ENCODE measurements at regions of chr15 and their contacts with region 1.

Region 1: DNA sequence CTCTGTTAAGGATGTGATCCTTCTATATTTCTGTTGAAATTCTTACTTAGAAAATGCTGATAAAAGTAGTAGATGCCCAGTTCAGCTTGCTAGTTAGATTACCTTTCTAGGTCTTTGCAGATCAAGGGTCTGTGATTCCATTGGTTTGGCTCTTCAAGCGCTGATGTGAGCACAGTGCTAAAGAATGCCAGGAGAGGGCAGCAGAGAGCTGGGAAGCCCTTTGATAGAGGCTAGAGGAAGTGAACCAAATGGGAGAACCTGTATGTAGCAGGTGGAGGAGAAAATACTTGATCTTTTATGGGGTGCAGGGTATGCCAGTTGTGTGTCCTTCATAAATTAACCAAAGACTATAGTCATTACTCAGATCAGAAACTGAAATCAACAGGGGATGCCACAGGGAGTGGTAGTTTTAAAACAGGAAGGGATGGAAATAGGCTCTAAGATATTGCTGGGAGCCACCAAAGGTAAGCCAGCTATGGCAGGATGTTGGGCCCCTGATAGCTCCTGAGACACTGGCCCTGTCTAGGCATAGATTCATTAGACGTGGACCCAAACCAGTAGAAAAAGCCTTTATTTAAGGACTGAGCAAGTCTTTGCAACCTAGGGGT is 677.4 kb downstream of the SQOR start:
- DNase-seq: no peak
- H3K4me3 ChIP-seq: no peak overlapping the region
- CTCF ChIP-seq: peak; percentile 84

Region 2: GRCh38 chr15:46301291-46301690 is 10.9 kb before region 1 on chr15:
- CTCF ChIA-PET with region 1: interaction called, 11 read pairs
- POLR2A ChIA-PET with region 1: no interaction called
- DNase-seq: no peak
- H3K4me3 ChIP-seq: no peak overlapping the region
- CTCF ChIP-seq: no peak

Region 3: GRCh38 chr15:46502668-46503067 is 190.4 kb after region 1 on chr15:
- CTCF ChIA-PET with region 1: interaction called, 38 read pairs
- POLR2A ChIA-PET with region 1: no interaction called
- DNase-seq: no peak
- H3K4me3 ChIP-seq: no peak overlapping the region
- CTCF ChIP-seq: no peak